PC-3 (cell line): ENCODE measurements at regions of chr2 and their contacts with region 1.

Region 1: GRCh38 chr2:43131024-43131889 is 95.1 kb downstream of the ZFP36L2 start:
- DNase-seq: peak; percentile 94
- ATAC-seq: peak; percentile 83
- H3K4me3 ChIP-seq: peak overlapping the region; percentile 28; the same call in 1 of the 2 replicates
- H3K27ac ChIP-seq: peak overlapping the region; percentile 83
- H3K4me1 ChIP-seq: peaks cover 23% of the 10 kb centered on the region
- H3K27me3 ChIP-seq: no peaks in the 10 kb centered on the region
- CTCF ChIP-seq: peak; percentile 66

Region 2: DNA sequence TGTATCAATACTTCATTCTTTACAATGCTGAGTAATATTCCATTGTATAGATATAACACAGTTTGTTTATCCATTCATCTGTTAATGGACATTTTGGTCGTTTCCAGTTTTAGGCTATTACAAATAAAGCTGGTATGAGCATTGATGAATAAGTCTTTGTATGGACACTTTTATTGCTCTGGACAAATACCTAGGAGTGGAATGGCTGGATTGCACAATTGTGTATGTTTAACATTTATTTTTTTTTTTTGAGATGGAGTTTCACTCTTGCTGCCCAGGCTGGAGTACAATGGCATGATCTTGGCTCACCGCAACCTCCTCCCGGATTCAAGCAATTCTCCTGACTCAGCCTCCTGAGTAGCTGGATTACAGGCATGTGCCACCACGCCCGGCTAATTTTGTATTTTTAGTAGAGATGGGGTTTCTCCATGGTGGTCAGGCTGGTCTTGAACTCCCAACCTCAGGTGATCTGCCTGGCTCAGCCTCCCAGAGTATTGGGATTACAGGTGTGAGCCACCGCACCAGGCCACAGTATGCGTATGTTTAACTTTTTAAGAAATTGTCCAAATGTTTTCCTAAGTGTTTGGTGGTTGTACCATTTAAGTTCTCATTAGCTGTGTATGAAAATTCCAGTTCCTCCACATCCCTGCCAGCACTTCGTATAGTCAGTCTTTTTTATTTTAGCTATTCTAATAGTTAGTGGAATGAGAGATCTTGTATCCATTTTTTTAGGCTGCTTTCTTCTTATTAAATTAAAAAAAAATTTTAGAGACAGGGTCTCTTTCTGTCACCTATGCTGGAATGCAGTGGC is 143.9 kb before region 1 on chr2:
- CTCF ChIA-PET with region 1: interaction called, 3 read pairs
- POLR2A ChIA-PET with region 1: no interaction called
- intact Hi-C with region 1: loop called (anchors 1 kb)
- DNase-seq: peak; percentile 95
- ATAC-seq: peak; percentile 91
- H3K4me3 ChIP-seq: no peak overlapping the region
- H3K27ac ChIP-seq: peak overlapping the region; percentile 90
- H3K4me1 ChIP-seq: peaks cover 23% of the 10 kb centered on the region
- H3K27me3 ChIP-seq: no peaks in the 10 kb centered on the region
- CTCF ChIP-seq: no peak

Region 3: DNA sequence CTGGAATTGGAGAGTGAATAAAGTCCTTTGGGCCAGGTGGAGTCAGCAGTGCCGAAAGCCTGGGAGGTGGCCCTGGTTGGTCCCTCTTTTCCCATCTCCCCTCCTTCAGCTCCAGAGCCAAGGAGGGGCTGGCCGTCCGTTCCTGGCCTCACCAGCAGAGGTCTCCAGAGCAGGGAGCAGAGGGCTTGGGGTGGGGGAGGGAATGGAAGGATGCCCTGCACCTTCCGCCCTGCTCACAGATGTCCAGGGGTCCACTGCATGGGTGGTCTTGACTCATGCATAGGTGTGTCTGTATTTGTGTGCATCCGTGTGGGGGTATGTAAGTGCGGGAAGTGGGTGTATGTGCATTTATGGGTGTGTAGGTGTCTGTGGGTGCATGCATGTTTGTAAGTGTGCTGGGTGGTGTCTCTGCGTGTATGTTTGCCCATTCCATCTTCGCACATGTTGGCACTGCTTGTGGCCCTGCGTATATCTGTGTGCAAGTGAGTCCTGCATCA is 106.7 kb before region 1 on chr2:
- CTCF ChIA-PET with region 1: no interaction called
- POLR2A ChIA-PET with region 1: no interaction called
- intact Hi-C with region 1: loop called (anchors 1 kb)
- DNase-seq: peak; percentile 69
- ATAC-seq: peak; percentile 85
- H3K4me3 ChIP-seq: no peak overlapping the region
- H3K27ac ChIP-seq: no peak overlapping the region
- H3K4me1 ChIP-seq: 0 out of 2 replicates have a peak, but pooled peaks cover 3% of the 10 kb centered on the region
- H3K27me3 ChIP-seq: no peaks in the 10 kb centered on the region
- CTCF ChIP-seq: peak; percentile 77

Region 4: DNA sequence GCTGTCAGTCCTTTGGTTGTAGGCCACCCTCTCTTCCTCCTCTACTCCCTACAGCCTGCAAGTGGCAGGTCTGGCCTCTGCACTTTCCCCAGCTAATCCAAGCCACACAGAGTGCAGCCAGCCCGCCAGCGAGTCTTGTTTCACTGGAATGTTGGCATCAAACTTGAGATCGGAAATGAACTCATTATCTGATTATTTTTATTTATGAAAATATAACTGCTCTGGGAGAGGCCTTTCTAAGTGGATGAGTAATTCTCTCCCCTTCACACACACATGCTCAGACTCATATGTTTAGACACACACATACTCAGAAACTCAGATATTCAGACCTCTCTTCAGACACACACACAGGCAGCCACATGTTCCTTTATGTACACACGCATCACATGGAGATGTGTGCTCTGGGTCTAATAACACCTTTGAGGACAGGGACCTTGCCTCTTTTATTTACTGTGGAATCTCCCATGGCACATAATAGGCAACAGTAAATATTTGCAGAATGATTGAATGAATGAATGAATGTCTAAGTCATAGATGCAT is 56.1 kb before region 1 on chr2:
- CTCF ChIA-PET with region 1: no interaction called
- POLR2A ChIA-PET with region 1: no interaction called
- intact Hi-C with region 1: loop called (anchors 2 kb)
- DNase-seq: peak; percentile 97
- ATAC-seq: peak; percentile 88
- H3K4me3 ChIP-seq: no peak overlapping the region
- H3K27ac ChIP-seq: peak overlapping the region; percentile 98
- H3K4me1 ChIP-seq: peaks cover 64% of the 10 kb centered on the region
- H3K27me3 ChIP-seq: no peaks in the 10 kb centered on the region
- CTCF ChIP-seq: no peak

Region 5: GRCh38 chr2:43219383-43220228 is 88.3 kb after region 1 on chr2:
- CTCF ChIA-PET with region 1: interaction called, 5 read pairs
- POLR2A ChIA-PET with region 1: no interaction called
- intact Hi-C with region 1: loop called (anchors 1 kb)
- DNase-seq: peak; percentile 79
- ATAC-seq: peak; percentile 61
- H3K4me3 ChIP-seq: peak overlapping the region; percentile 88
- H3K27ac ChIP-seq: peak overlapping the region; percentile 90
- H3K4me1 ChIP-seq: peaks cover 43% of the 10 kb centered on the region
- H3K27me3 ChIP-seq: no peaks in the 10 kb centered on the region
- CTCF ChIP-seq: peak; percentile 25; the same call in 1 of the 2 replicates

Region 6: GRCh38 chr2:43484323-43484930 is 353.2 kb after region 1 on chr2:
- CTCF ChIA-PET with region 1: no interaction called
- POLR2A ChIA-PET with region 1: no interaction called
- intact Hi-C with region 1: loop called (anchors 5 kb)
- DNase-seq: peak; percentile 79
- ATAC-seq: no peak
- H3K4me3 ChIP-seq: no peak overlapping the region
- H3K27ac ChIP-seq: no peak overlapping the region
- H3K4me1 ChIP-seq: peaks cover 27% of the 10 kb centered on the region
- H3K27me3 ChIP-seq: no peaks in the 10 kb centered on the region
- CTCF ChIP-seq: peak; percentile 82

Region 7: DNA sequence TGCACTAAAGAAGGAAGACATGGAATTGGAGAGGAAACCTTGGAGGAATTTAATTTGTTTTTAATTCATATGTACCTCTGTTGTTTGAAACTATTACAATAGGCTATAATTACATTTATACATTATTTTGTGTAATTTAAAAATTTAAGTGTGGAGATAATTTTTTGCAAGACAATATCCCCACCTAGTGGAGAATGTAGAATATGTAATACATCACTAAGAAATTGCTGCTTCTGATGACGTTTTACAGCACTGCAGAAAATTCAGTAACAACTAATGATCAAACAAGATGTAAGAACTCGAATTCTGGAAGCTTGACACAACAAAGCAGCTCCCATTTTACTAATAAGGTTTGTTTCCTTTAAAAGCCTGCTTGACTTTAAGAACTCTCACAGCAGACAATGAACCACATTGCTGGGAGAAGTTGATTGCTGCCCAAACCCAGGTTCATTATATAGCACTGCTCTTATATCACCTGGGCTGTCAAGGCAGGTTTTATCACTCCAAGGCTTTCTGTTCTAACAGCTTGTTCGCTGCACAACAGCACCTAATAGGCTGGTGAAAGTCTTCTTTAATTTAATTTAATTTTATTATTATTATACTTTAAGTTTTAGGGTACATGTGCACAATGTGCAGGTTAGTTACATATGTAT is 411.2 kb after region 1 on chr2:
- CTCF ChIA-PET with region 1: no interaction called
- POLR2A ChIA-PET with region 1: no interaction called
- intact Hi-C with region 1: loop called (anchors 10 kb)
- DNase-seq: peak; percentile 73
- ATAC-seq: peak; percentile 56
- H3K4me3 ChIP-seq: no peak overlapping the region
- H3K27ac ChIP-seq: no peak overlapping the region
- H3K4me1 ChIP-seq: peaks cover 25% of the 10 kb centered on the region
- H3K27me3 ChIP-seq: no peaks in the 10 kb centered on the region
- CTCF ChIP-seq: peak; percentile 70